ENCODE measurements at regions of chr5 and their contacts with region 1.

Region 1: GRCh38 chr5:138035605-138036537 is 3.0 kb upstream of the FAM13B start:
- DNase-seq: peak; percentile 41 to 57
- ATAC-seq: peak; percentile 38 to 75 (median 64)
- H3K4me3 ChIP-seq: no peak overlapping the region
- H3K27ac ChIP-seq: no peak overlapping the region
- H3K4me1 ChIP-seq: peaks cover 21% of the 10 kb centered on the region
- H3K27me3 ChIP-seq: no peaks in the 10 kb centered on the region
- CTCF ChIP-seq: peak; percentile 86

Region 2: GRCh38 chr5:138011991-138012390 is 23.9 kb before region 1 on chr5:
- intact Hi-C with region 1: no loop called
- DNase-seq: no peak
- ATAC-seq: no peak
- H3K4me3 ChIP-seq: no peak overlapping the region
- H3K27ac ChIP-seq: no peak overlapping the region
- H3K4me1 ChIP-seq: no peaks in the 10 kb centered on the region
- H3K27me3 ChIP-seq: no peaks in the 10 kb centered on the region
- CTCF ChIP-seq: no peak

Region 3: GRCh38 chr5:138069068-138069600 is 33.3 kb after region 1 on chr5:
- intact Hi-C with region 1: loop called (anchors 2 kb)
- DNase-seq: no peak
- ATAC-seq: no peak
- H3K4me3 ChIP-seq: no peak overlapping the region
- H3K27ac ChIP-seq: no peak overlapping the region
- H3K4me1 ChIP-seq: no peaks in the 10 kb centered on the region
- H3K27me3 ChIP-seq: no peaks in the 10 kb centered on the region
- CTCF ChIP-seq: no peak

Measured in psoas muscle (tissue), 8 donors.